ENCODE measurements at regions of chr11 and their contacts with region 1.

Region 1: GRCh38 chr11:14892036-14892567 is at the start of gene CYP2R1:
- DNase-seq: peak; percentile 98
- H3K4me3 ChIP-seq: peak within 1 kb of the TSS; percentile 55 to 78 (median 64)
- H3K27ac ChIP-seq: peak within 1 kb of the TSS; percentile 92 to 98 (median 95)
- H3K4me1 ChIP-seq: peaks cover 4 to 39% (median 9%) of the 10 kb centered on the region in 4 donors
- H3K27me3 ChIP-seq: no peaks in the 10 kb centered on the region
- CTCF ChIP-seq: no peak
- EP300 ChIP-seq: no peak
- POLR2A ChIP-seq: peak; percentile 86
- total RNA-seq, gene CYP2R1: 26.1 to 54.2 (median 44.6) TPM

Region 2: DNA sequence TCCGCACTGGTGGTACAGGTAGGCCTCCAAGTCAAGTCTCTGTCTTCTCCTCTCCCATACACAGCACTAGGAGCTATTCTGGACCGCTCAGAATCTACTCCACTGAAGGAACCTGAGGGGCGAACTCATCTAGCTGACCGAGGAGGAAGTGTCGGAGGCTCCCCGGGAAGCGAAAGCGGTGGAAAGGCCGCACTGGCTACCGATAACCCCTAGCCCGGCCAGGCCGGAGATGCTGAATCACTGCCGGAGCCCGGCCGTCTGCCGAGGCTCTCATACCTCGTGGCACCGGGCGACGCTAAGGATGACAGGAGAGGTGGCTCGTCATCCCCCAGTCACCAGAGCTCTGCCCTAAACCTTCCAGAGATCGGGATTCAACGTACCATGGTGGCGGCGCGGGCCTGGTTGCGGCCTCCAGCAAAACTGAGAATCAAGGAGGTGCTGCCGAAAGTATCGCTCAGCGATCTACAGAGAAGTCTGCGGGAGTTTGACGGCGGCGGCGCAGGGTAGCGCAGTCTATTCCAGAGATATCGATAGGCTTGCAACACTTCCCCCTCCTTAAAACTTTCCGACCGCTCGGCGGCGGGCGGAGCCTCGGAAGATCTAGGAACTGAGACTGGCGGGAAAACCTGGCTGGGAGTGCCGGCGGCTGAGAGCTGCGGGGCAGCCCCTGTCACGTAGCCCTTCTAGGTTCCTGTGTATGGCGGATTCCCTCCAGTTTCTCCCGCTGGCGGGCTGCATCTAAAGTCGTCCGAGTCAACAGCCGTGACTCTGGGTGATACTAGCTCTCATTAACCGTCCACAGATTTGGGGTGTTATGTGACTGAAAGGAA is 372.0 kb before region 1 on chr11 and contains the start of gene PSMA1:
- in situ Hi-C with region 1: loop called in 3 of 4 experiments (anchors 5 to 25 kb)
- intact Hi-C with region 1: loop called (anchors 5 kb)
- DNase-seq: peak; percentile 96
- H3K4me3 ChIP-seq: peak within 1 kb of the TSS; percentile 57 to 89 (median 67)
- H3K27ac ChIP-seq: peak within 1 kb of the TSS; percentile 87 to 94 (median 90)
- H3K4me1 ChIP-seq: peaks cover 6 to 23% (median 18%) of the 10 kb centered on the region in 4 donors
- H3K27me3 ChIP-seq: no peaks in the 10 kb centered on the region
- CTCF ChIP-seq: peak; percentile 53 to 91 (median 61)
- EP300 ChIP-seq: no peak
- POLR2A ChIP-seq: peak; percentile 71
- total RNA-seq, gene PSMA1: 12.1 to 112 (median 70.4) TPM

Region 3: DNA sequence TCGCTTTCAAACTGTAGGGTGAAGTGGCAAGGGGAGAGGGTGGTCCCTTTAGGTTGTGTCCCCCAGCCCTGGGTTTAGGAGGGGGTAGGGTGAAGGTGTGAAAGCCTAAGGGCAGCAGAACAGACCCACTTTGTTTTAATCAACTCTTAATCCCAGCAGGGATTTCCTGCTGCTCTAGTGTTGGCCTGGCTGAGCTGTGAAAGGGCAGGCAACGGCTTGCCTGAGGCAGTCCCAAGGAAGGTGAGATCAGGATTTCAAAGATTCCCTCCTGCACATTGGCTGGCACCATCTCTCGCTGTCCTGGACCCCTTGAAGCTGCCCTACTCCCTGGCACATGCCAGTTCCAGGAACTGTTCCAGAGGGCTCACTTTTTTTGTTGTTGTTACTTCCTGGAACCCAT is 443.9 kb after region 1 on chr11:
- in situ Hi-C with region 1: no loop called
- intact Hi-C with region 1: no loop called
- DNase-seq: no peak
- H3K4me3 ChIP-seq: no peak overlapping the region
- H3K27ac ChIP-seq: no peak overlapping the region
- H3K4me1 ChIP-seq: no peaks in the 10 kb centered on the region
- H3K27me3 ChIP-seq: no peaks in the 10 kb centered on the region
- CTCF ChIP-seq: no peak
- EP300 ChIP-seq: no peak
- POLR2A ChIP-seq: no peak